Vagina (tissue), 2 donors: ENCODE measurements at regions of chr6 and their contacts with region 1.

Region 1: GRCh38 chr6:133923938-133924593 is 29.0 kb upstream of the TBPL1 start:
- DNase-seq: no peak
- H3K4me3 ChIP-seq: no peak overlapping the region
- H3K27ac ChIP-seq: no peak overlapping the region
- H3K4me1 ChIP-seq: no peaks in the 10 kb centered on the region
- H3K27me3 ChIP-seq: no peaks in the 10 kb centered on the region
- CTCF ChIP-seq: peak; percentile 65 to 89 (median 81)
- POLR2A ChIP-seq: no peak

Region 2: DNA sequence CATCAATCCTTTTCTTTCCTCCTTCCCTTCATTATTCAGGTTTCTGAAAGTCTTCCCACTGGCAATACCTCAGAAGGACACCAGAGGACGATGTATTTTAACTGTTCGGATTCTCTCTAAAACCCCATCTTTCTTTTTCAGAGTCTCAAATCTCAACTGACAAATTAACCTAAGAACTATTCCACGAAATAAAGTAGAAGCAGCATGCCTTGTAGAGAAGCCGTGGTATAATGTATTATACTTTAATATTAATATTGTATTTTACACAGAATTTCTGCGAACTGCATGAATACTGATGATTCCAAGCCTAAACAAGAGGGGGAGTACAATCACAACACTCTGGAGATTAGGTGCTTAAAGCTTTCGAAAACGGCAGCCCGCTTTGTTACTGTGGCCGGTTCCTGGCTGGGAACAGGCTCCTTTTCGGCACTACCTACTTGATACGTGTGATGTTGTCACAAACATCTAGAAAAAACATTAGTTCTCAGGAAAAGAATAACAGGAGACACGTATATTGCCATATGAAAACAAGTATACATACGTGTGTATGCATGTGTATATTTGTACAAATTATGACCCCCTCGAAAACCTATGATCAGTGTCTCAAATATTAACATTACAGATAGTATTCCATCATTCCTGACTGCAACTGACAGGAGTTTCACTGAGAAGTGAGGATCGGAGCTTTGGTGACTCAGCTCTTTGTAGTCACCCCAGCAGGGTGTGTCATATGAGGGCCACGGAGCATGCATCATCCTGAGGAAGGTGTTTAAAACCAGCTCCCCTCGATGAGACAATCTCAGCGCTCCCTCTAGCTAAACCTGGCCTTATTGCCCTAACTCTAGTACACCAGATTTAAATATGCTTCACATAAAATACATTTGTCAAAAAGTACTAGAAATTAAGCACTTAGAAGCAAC is 354.8 kb before region 1 on chr6:
- intact Hi-C with region 1: loop called (anchors 1 kb)
- DNase-seq: no peak
- H3K4me3 ChIP-seq: peak overlapping the region; percentile 26 to 32
- H3K27ac ChIP-seq: peak overlapping the region; percentile 47
- H3K4me1 ChIP-seq: peaks cover 15% of the 10 kb centered on the region
- H3K27me3 ChIP-seq: no peaks in the 10 kb centered on the region
- CTCF ChIP-seq: peak; percentile 87 to 97 (median 90)
- POLR2A ChIP-seq: no peak

Region 3: DNA sequence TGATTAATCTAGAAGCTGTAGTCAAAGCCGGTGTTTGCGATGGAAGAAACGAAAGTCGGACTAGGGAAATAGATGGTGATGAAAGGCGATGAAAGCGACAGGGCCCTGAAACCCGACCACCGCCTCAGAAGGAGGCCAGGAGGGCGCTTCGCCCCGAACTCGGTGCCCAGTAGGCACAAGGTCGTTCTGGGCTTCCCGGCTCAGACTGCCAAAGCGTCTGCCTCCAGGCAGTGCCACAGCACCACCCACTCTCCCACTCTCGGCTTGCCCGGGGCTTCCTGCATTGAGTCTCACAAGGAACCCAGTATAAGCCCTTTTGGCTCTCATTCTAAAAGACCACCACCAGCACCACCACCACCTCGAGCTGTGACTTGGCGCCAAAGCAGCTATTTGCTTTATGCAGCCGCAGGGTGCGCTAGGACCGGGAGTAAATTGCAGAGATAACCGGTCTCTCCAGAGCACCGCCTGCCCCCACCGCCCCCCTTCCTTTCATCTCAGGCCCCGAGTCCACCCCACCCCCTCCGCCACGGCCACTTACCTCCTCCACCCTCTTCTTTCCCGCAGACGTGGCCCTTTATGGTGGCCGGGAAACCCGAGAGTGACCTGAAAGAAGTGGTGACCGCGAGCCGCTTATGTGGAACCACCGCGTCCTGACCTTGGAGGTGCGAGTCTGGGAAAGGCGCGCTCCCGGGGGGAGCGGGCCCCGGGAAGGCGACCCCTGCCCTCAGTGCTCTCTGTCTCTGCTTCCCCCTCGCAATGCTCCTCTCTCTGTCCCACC is 32.7 kb before region 1 on chr6:
- intact Hi-C with region 1: no loop called
- DNase-seq: no peak
- H3K4me3 ChIP-seq: peak overlapping the region; percentile 54 to 55
- H3K27ac ChIP-seq: peak overlapping the region; percentile 86
- H3K4me1 ChIP-seq: peaks cover 41% of the 10 kb centered on the region
- H3K27me3 ChIP-seq: peaks cover 9% of the 10 kb centered on the region
- CTCF ChIP-seq: no peak
- POLR2A ChIP-seq: no peak

Region 4: DNA sequence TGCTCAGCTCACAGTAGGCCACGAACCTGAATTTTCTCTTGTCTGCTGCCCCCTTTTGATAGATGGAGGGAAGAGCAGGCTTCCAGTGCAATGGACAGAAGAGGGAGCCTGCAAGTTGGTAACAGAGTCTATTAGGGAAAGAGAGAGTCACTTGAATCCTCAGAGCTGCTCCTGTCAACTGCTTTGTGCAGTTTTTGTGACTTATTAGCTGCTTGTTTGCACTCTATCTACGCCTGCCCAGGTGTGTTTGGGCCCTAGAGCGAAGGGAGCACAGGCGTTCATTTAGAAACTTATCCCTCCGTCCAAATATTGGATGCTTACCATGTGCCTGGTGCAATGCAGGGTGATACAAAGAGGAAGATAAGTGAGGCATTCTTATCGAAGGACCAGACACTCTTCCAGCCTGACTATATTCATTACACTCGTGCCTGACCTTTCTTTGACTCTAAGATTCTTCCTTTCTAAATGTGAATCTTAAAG is 139.9 kb after region 1 on chr6:
- intact Hi-C with region 1: loop called (anchors 10 kb)
- DNase-seq: peak in 1 of 2 donors; percentile 85
- H3K4me3 ChIP-seq: no peak overlapping the region
- H3K27ac ChIP-seq: no peak overlapping the region
- H3K4me1 ChIP-seq: peaks cover 2% of the 10 kb centered on the region
- H3K27me3 ChIP-seq: no peaks in the 10 kb centered on the region
- CTCF ChIP-seq: peak; percentile 68 to 71 (median 70)
- POLR2A ChIP-seq: no peak

Region 5: GRCh38 chr6:134097114-134097707 is 173.1 kb after region 1 on chr6:
- intact Hi-C with region 1: loop called (anchors 5 kb)
- DNase-seq: no peak
- H3K4me3 ChIP-seq: no peak overlapping the region
- H3K27ac ChIP-seq: no peak overlapping the region
- H3K4me1 ChIP-seq: no peaks in the 10 kb centered on the region
- H3K27me3 ChIP-seq: no peaks in the 10 kb centered on the region
- CTCF ChIP-seq: peak; percentile 36 to 75 (median 74)
- POLR2A ChIP-seq: no peak